ENCODE measurements at regions of chr6 and their contacts with region 1.

Region 1: DNA sequence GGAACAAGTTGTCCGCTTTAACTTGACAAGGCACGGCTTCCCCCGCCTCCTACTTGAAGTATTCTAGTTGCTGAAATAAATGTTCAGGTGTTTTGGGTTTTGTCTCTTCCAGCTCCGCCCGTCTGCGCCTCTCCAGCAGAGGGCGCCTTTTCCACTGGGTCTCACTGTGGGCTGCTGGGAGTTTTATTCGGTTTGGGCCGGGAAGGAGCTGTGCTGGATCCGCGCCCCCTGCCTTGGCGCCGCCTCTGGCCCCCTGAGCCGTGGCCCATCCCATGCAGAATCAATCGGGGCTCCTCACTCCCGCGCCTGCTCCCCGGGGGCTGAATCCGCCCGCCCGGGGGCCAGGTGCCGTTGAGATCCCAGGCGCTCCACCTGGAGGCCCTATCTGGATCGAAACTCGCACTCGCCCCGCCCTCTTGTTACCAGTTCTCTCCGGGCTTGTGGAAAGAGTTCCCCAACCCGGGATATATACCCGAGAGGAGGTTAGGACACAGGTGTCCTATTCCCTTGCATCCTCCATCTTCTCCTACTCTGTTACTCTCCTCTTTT is 51.0 kb upstream of the TCF21 start:
- DNase-seq: peak; percentile 71
- H3K4me3 Mint-ChIP-seq: peak overlapping the region; percentile 60
- H3K27ac Mint-ChIP-seq: no peak overlapping the region
- H3K4me1 Mint-ChIP-seq: peaks cover 3% of the 10 kb centered on the region
- H3K27me3 Mint-ChIP-seq: peaks cover 15% of the 10 kb centered on the region

Region 2: DNA sequence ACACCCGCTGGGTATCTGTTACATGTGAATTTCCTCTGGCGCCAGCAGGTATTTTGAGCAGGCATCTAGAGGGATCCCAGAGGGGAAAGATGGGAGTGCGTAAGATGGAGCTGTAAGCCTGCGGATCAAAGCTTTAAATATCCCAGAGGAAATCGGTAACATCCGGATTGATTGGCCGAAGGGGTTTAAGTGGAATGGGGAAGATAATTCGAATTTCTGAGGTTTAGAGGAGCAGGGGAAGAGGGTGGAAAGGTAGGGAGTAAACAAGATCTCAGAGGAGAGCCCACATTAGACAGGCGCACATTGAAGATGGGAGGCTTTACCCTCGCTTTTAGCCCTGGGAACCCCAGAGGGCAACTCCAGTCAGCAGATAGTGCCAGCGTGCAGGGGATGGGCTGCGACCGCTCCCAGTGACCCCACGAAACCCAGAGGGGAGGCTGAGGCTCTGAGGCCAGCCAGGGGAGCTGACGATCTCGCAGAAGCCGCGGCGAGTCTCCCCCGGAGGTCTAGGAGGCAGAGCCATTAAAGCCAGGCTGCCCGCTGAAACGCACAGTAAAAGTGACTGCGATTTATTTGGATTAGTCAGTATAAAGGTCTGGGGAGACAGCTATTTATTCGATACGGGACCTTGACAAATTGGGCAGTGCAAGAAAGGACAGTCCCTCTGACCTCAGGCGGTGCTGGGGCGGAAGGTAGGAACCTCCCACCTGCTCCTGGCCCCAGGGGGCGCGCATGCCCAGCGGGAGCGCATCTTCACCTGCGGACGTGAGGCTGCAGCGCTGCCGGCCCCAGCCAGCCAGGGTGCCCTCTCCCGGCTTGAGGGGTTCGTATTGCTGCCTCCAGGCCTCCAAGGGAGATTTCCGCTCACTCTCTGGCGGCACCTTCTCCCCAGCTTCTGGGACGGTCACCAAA is 16.7 kb after region 1 on chr6:
- CTCF ChIA-PET with region 1: interaction called, 15 read pairs
- POLR2A ChIA-PET with region 1: no interaction called
- intact Hi-C with region 1: no loop called
- DNase-seq: peak; percentile 11
- H3K4me3 Mint-ChIP-seq: no peak overlapping the region
- H3K27ac Mint-ChIP-seq: no peak overlapping the region
- H3K4me1 Mint-ChIP-seq: peaks cover 16% of the 10 kb centered on the region
- H3K27me3 Mint-ChIP-seq: peaks cover 49% of the 10 kb centered on the region